Caco-2 (cell line): ENCODE measurements at regions of chr3 and their contacts with region 1.

Region 1: DNA sequence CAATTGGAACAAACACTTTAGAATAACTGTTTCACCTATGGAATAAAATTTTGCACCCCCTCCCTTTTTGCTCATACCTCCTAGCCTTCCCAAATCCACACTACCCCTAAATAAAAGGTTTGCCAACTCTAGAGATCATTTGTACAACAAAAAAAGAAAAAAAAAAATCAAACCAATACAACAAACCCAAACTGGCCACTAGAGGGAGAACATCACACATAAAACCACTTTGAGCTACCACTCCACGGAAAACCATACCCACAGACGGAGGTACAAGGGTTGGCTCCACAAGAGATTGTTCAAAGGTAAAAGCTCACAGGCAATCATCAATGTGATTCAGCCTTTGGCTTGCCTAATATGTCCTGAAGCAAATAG is 47.6 kb downstream of the SETMAR start:
- DNase-seq: peak; percentile 43 to 55
- H3K4me3 ChIP-seq: no peak overlapping the region
- H3K4me3 Mint-ChIP-seq: peak overlapping the region; percentile 43
- H3K27ac Mint-ChIP-seq: peak overlapping the region; percentile 7
- H3K4me1 ChIP-seq: peaks cover 11% of the 10 kb centered on the region; the same call in 1 of the 2 replicates
- H3K4me1 Mint-ChIP-seq: peaks cover 20% of the 10 kb centered on the region
- H3K27me3 ChIP-seq: no peaks in the 10 kb centered on the region
- H3K27me3 Mint-ChIP-seq: no peaks in the 10 kb centered on the region
- CTCF ChIP-seq: peak; percentile 68 to 70

Region 2: GRCh38 chr3:4218456-4219226 is 132.1 kb before region 1 on chr3:
- CTCF ChIA-PET with region 1: no interaction called
- POLR2A ChIA-PET with region 1: no interaction called
- intact Hi-C with region 1: no loop called
- DNase-seq: peak in 1 of 2 experiments; percentile 43
- H3K4me3 ChIP-seq: no peak overlapping the region
- H3K4me3 Mint-ChIP-seq: no peak overlapping the region
- H3K27ac Mint-ChIP-seq: no peak overlapping the region
- H3K4me1 ChIP-seq: no peaks in the 10 kb centered on the region
- H3K4me1 Mint-ChIP-seq: no peaks in the 10 kb centered on the region
- H3K27me3 ChIP-seq: no peaks in the 10 kb centered on the region
- H3K27me3 Mint-ChIP-seq: no peaks in the 10 kb centered on the region
- CTCF ChIP-seq: no peak

Region 3: DNA sequence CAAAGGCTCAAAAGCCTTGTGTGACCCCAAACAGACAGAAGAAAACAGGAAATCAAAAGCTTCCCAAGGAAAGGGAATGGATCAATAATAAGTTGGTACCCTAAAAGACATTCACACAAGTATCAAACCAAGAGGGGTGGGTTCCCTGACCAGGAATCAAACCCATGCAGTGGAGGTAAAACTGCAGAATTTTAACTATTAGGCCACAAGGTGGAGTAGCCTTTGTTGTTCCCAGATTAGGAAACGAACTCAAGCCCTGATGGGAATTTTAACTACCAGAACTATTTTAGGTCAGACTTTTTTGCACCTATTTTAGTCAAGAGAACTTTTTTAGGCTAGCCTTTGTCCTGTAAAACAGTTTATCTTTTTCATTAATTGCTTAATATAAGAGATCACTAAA is 16.2 kb before region 1 on chr3:
- CTCF ChIA-PET with region 1: no interaction called
- POLR2A ChIA-PET with region 1: no interaction called
- intact Hi-C with region 1: no loop called
- DNase-seq: no peak
- H3K4me3 ChIP-seq: no peak overlapping the region
- H3K4me3 Mint-ChIP-seq: no peak overlapping the region
- H3K27ac Mint-ChIP-seq: no peak overlapping the region
- H3K4me1 ChIP-seq: no peaks in the 10 kb centered on the region
- H3K4me1 Mint-ChIP-seq: no peaks in the 10 kb centered on the region
- H3K27me3 ChIP-seq: no peaks in the 10 kb centered on the region
- H3K27me3 Mint-ChIP-seq: no peaks in the 10 kb centered on the region
- CTCF ChIP-seq: no peak

Region 4: DNA sequence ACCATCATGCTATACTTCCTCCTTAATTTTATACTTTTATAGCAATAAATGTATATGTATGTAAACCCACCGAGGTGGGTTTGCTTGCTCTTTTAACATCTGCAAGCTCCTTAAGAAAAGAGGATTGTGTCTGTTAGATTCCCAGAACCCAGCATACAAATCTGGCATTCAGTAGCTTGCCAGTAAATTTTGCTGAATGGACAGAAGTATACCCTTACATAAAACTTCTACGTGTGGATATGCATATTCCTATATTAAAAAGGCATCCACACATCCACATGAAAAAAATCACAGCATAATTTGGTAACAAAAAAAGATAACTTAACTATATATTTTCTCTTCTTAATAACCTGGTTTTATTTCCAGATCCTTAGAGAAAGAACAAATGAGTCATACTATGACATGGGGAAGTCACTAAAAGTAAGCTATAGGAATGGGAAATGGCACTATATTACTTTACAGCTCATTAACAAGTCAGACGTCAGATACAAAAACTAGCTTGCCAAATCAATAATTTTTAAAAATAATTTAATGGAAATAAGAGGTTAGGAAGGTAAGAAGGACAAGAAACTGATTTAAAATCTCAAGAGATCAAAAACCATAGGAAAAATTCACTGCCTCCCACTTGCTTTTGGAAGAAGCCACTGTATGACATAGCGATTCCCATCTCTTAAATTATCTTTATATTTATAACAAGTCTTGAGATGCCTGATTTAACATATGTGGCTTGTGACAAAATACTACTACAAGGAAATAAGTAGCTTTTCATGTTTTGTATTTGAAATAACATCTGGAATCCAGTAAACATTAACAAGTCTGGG is 47.6 kb after region 1 on chr3:
- CTCF ChIA-PET with region 1: no interaction called
- POLR2A ChIA-PET with region 1: no interaction called
- intact Hi-C with region 1: no loop called
- DNase-seq: no peak
- H3K4me3 ChIP-seq: no peak overlapping the region
- H3K4me3 Mint-ChIP-seq: no peak overlapping the region
- H3K27ac Mint-ChIP-seq: no peak overlapping the region
- H3K4me1 ChIP-seq: no peaks in the 10 kb centered on the region
- H3K4me1 Mint-ChIP-seq: peaks cover 9% of the 10 kb centered on the region
- H3K27me3 ChIP-seq: no peaks in the 10 kb centered on the region
- H3K27me3 Mint-ChIP-seq: no peaks in the 10 kb centered on the region
- CTCF ChIP-seq: no peak

Region 5: DNA sequence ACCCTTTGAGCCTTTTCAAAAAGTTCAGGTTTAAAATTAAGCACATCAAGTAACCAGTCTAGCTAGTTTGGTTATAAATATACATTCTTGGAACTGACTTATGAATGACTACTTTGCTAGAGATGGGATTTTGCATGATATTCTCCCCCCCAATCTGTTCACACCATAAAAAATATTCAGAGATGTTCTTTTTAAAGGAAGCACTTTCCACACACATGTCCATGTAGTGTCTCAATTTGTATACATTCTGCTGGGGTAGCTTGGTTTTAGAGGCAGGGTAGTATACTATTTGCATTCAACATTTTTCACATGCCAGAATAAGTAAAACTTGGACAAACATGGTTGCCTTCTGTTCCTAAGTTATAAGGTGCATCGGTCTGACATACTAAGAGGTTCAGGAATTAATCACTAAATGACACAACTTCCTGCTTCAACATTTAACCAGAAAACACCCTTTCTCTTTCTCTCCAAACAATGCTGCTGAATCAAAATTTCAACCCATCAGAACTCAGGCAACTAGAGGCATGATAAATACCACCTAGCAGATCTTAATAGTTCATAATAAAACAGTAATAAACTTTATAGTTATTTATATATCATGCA is 59.3 kb after region 1 on chr3:
- CTCF ChIA-PET with region 1: no interaction called
- POLR2A ChIA-PET with region 1: no interaction called
- intact Hi-C with region 1: loop called (anchors 2 kb)
- DNase-seq: no peak
- H3K4me3 ChIP-seq: no peak overlapping the region
- H3K4me3 Mint-ChIP-seq: no peak overlapping the region
- H3K27ac Mint-ChIP-seq: no peak overlapping the region
- H3K4me1 ChIP-seq: no peaks in the 10 kb centered on the region
- H3K4me1 Mint-ChIP-seq: no peaks in the 10 kb centered on the region
- H3K27me3 ChIP-seq: no peaks in the 10 kb centered on the region
- H3K27me3 Mint-ChIP-seq: no peaks in the 10 kb centered on the region
- CTCF ChIP-seq: no peak

Region 6: DNA sequence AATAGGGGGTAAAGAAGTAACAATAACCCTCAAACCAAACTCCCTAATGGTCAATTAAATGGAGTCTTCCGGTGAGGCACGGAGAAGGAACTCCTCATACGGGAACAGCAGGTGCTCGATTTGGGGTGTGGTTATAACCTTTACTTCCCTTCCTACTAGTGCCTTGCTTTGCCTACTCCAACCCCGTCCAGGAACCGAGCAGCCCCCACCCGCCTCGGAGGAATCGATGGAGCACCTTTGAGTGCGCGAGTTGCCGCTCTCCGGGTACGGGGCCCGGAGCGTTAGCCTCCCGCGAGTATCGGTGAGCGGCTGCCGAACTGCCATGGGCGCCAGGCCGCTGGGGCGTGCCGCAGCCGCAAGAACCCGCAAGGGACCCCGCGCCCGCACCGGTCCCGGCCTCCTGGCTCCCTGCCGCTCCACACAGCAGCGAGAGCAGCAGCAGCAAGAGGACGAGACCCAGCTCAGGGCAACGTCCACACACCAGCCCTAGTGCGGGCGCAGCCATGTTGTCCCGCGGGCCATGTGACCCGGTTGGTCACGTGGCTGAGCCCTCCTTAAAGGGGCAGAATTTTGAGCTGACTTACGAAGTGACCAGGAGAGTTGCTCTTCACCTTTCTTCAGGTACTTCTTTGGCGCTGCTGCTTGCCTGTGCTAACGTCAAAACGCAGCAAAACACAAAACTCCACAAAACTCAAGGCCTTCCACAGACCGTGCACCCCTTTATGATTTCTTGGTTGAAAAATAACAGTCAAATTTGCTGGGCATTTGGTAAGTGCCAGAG is 116.2 kb after region 1 on chr3 and contains the start of gene SUMF1:
- CTCF ChIA-PET with region 1: interaction called, 4 read pairs
- POLR2A ChIA-PET with region 1: interaction called, 3 read pairs
- intact Hi-C with region 1: loop called (anchors 2 kb)
- DNase-seq: peak; percentile 82 to 84
- H3K4me3 ChIP-seq: peak within 1 kb of the TSS; percentile 78
- H3K4me3 Mint-ChIP-seq: peak within 1 kb of the TSS; percentile 85
- H3K27ac Mint-ChIP-seq: peak within 1 kb of the TSS; percentile 93
- H3K4me1 ChIP-seq: peaks cover 7% of the 10 kb centered on the region
- H3K4me1 Mint-ChIP-seq: peaks cover 6% of the 10 kb centered on the region
- H3K27me3 ChIP-seq: no peaks in the 10 kb centered on the region
- H3K27me3 Mint-ChIP-seq: peaks cover under 1% of the 10 kb centered on the region
- CTCF ChIP-seq: no peak
- total RNA-seq, gene SUMF1: 22.9 and 24.4 TPM in 2 replicates

Region 7: GRCh38 chr3:4571690-4572334 is 221.0 kb after region 1 on chr3:
- CTCF ChIA-PET with region 1: no interaction called
- POLR2A ChIA-PET with region 1: no interaction called
- intact Hi-C with region 1: loop called (anchors 1 kb)
- DNase-seq: peak in 1 of 2 experiments; percentile 26
- H3K4me3 ChIP-seq: no peak overlapping the region
- H3K4me3 Mint-ChIP-seq: no peak overlapping the region
- H3K27ac Mint-ChIP-seq: no peak overlapping the region
- H3K4me1 ChIP-seq: no peaks in the 10 kb centered on the region
- H3K4me1 Mint-ChIP-seq: no peaks in the 10 kb centered on the region
- H3K27me3 ChIP-seq: no peaks in the 10 kb centered on the region
- H3K27me3 Mint-ChIP-seq: peaks cover 3% of the 10 kb centered on the region
- CTCF ChIP-seq: peak; percentile 16 to 33

Region 8: DNA sequence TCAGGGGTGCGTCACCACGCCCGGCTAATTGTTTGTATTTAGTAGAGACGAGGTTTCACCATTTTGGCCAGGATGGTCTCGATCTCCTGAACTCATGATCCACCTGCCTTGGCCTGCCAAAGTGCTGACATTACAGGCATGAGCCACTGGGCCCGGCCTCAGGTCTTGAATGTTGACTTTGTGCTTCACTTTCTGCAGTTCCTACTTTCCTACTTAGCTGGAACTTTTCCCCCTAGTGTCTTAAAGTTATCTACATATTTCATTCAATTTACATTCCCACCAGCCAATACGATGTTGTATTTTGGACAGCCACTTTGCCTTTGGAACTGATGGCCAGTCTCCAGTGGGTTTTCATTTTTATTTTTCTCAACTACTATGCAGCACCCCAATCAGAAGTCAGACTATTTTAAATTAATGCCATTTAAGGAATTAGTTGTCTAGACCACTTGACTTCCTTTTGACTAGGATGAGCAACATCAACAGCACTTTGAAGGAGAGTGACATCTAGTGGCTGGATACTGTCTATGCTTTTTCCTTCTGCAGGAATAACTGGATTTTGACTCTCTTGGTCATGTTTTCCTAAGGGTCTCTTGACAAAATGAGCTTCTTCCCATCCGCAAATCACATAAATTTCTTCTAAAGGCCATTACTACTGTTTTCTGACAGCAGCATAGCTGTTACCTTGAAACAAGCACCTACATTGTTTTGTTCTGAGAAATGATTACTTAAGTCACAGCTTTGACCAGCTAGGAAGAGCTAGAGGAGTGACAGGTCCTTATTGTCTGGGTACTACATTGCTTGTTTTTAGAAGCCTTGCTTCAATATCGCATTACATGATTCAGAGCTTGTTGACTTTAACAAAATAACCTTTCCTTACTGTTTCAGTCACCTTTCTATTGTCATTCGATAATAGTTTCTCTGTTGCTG is 282.6 kb after region 1 on chr3:
- CTCF ChIA-PET with region 1: interaction called, 21 read pairs
- POLR2A ChIA-PET with region 1: no interaction called
- intact Hi-C with region 1: loop called (anchors 1 kb)
- DNase-seq: peak in 1 of 2 experiments; percentile 39
- H3K4me3 ChIP-seq: no peak overlapping the region
- H3K4me3 Mint-ChIP-seq: no peak overlapping the region
- H3K27ac Mint-ChIP-seq: no peak overlapping the region
- H3K4me1 ChIP-seq: no peaks in the 10 kb centered on the region
- H3K4me1 Mint-ChIP-seq: no peaks in the 10 kb centered on the region
- H3K27me3 ChIP-seq: no peaks in the 10 kb centered on the region
- H3K27me3 Mint-ChIP-seq: no peaks in the 10 kb centered on the region
- CTCF ChIP-seq: peak; percentile 76 to 86

Region 9: DNA sequence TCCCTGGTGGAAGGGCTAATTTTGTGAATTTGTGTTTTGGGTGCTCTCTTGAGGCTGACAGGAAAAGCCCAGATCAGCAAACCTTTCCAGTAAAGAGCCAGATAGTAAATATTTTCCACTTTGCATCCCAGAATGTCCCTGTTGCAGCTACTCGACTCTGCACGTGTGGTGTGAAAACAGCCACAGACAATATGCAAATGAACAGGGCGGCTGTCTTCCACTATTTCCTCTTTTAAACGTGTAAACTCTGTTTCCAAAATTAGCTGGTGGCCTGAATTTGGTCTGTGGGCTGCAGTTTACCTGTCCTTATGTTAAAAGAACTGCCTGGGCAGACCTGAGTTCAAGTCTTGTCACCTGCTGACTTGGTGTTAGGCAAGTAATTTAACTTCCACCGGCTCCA is 1039.4 kb after region 1 on chr3:
- CTCF ChIA-PET with region 1: no interaction called
- POLR2A ChIA-PET with region 1: no interaction called
- intact Hi-C with region 1: no loop called
- DNase-seq: no peak
- H3K4me3 ChIP-seq: no peak overlapping the region
- H3K4me3 Mint-ChIP-seq: no peak overlapping the region
- H3K27ac Mint-ChIP-seq: peak overlapping the region; percentile 78
- H3K4me1 ChIP-seq: peaks cover 34% of the 10 kb centered on the region
- H3K4me1 Mint-ChIP-seq: peaks cover 22% of the 10 kb centered on the region
- H3K27me3 ChIP-seq: no peaks in the 10 kb centered on the region
- H3K27me3 Mint-ChIP-seq: no peaks in the 10 kb centered on the region
- CTCF ChIP-seq: no peak